ENCODE measurements at regions of chr3 and their contacts with region 1.

Region 1: DNA sequence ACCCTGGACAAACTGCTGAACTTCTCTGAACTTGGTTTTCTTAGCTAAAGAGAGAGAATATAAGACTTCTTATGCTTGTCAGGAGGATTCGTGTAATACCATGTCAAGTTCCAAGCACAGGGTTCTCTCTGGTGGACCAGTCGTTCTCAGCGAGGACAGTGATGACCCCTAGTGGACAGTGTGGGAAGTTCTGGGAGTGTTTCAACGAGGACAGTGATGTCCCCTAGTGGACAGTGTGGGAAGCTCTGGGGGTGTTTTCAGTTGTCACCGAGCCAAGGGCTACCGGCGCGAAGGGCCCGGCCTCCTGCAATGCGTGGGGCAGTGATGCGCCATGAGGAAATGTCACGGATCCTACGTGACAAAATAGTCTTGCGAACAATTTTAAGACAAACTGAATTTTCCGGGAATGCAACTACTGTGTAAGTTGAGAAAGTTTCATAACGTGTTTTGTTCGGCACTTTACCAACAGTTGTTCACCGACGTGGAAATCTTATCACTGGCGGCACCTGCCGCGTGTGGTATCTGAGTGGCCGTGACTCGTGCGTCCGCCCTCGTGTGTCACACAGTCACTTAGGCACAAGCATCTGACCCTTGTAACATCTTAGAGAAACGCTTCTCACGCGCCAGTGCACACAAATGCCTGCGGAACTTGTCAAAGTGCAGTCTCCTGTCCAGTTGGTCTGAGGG is 39.3 kb upstream of the MUC4 start:
- DNase-seq: peak; percentile 93
- H3K4me3 Mint-ChIP-seq: peak overlapping the region; percentile 16
- H3K27ac Mint-ChIP-seq: no peak overlapping the region
- H3K4me1 Mint-ChIP-seq: peaks cover 4% of the 10 kb centered on the region
- H3K27me3 Mint-ChIP-seq: peaks cover 2% of the 10 kb centered on the region

Region 2: GRCh38 chr3:195558602-195559001 is 292.4 kb before region 1 on chr3:
- CTCF ChIA-PET with region 1: interaction called, 7 read pairs
- POLR2A ChIA-PET with region 1: no interaction called
- intact Hi-C with region 1: loop called (anchors 1 kb)
- DNase-seq: no peak
- H3K4me3 Mint-ChIP-seq: no peak overlapping the region
- H3K27ac Mint-ChIP-seq: no peak overlapping the region
- H3K4me1 Mint-ChIP-seq: peaks cover 25% of the 10 kb centered on the region
- H3K27me3 Mint-ChIP-seq: no peaks in the 10 kb centered on the region

Region 3: GRCh38 chr3:195763843-195764825 is 86.9 kb before region 1 on chr3:
- CTCF ChIA-PET with region 1: no interaction called
- POLR2A ChIA-PET with region 1: no interaction called
- intact Hi-C with region 1: no loop called
- DNase-seq: no peak
- H3K4me3 Mint-ChIP-seq: no peak overlapping the region
- H3K27ac Mint-ChIP-seq: no peak overlapping the region
- H3K4me1 Mint-ChIP-seq: peaks cover 2% of the 10 kb centered on the region
- H3K27me3 Mint-ChIP-seq: peaks cover 35% of the 10 kb centered on the region

Region 4: DNA sequence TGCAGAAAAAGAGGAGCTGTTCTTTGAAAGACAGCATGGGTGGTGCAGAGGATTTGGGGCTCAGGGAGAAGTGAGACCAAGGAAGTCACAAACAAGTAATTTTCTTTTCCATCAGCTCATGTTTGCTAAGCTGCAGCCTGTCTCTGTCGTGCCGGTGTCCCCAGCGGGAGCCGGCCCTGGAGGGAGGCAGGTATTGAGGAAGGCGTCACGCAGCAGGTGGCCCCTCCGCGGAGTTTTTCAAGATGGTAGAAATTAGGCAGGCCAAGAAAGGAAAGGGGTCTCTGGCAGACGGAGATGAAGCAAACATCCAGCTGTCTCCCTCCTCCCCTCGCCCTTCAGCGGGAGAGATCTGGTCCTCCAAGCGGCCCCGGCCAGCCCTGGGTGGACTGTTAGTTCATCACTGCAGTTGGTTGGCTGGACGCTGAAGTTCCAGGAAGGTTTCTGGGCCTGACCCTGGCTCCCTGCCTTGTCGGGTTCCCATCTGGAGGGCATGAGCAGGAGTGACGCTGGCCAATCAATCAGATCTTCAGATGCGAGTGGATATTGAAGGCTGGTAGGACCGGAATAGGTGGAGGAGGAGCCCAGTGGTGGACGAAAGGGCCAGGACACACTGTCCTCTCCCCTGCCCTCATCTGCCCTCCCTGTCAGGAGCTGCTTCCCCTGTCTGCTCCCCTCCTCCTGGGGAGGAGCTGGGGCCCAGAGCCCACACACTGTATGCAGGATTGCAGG is 11.6 kb before region 1 on chr3:
- CTCF ChIA-PET with region 1: interaction called, 25 read pairs
- POLR2A ChIA-PET with region 1: no interaction called
- intact Hi-C with region 1: no loop called
- DNase-seq: no peak
- H3K4me3 Mint-ChIP-seq: no peak overlapping the region
- H3K27ac Mint-ChIP-seq: no peak overlapping the region
- H3K4me1 Mint-ChIP-seq: no peaks in the 10 kb centered on the region
- H3K27me3 Mint-ChIP-seq: peaks cover 2% of the 10 kb centered on the region

Region 5: GRCh38 chr3:195894780-195895607 is 44.0 kb after region 1 on chr3:
- CTCF ChIA-PET with region 1: interaction called, 29 read pairs
- POLR2A ChIA-PET with region 1: no interaction called
- intact Hi-C with region 1: no loop called
- DNase-seq: peak; percentile 84
- H3K4me3 Mint-ChIP-seq: peak overlapping the region; percentile 84
- H3K27ac Mint-ChIP-seq: peak overlapping the region; percentile 89
- H3K4me1 Mint-ChIP-seq: peaks cover 39% of the 10 kb centered on the region
- H3K27me3 Mint-ChIP-seq: no peaks in the 10 kb centered on the region

Region 6: DNA sequence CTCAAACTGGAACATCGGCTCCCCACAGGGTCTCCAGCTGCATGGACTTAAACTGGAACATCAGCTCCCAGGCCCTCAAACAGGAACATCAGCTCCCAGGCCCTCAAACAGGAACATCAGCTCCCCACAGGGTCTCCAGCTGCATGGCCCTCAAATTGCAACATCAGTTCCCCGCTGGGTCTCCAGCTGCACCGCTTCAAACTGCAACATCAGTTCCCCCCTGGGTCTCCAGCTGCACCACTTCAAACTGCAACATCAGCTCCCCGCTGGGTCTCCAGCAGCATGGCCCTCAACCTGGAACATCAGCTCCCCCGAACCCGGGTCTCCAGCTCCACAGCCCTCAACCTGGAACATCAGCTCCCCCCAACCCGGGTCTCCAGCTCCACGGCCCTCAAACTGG is 148.9 kb after region 1 on chr3:
- CTCF ChIA-PET with region 1: interaction called, 4 read pairs
- POLR2A ChIA-PET with region 1: no interaction called
- intact Hi-C with region 1: loop called (anchors 10 kb)
- DNase-seq: no peak
- H3K4me3 Mint-ChIP-seq: no peak overlapping the region
- H3K27ac Mint-ChIP-seq: no peak overlapping the region
- H3K4me1 Mint-ChIP-seq: no peaks in the 10 kb centered on the region
- H3K27me3 Mint-ChIP-seq: peaks cover 21% of the 10 kb centered on the region

Measured in activated CD4-positive, alpha-beta memory T cell treated with anti-CD3 and anti-CD28 coated beads for 36 hours (primary cell).